K562 (cell line): ENCODE measurements at regions of chr4 and their contacts with region 1.

Region 1: DNA sequence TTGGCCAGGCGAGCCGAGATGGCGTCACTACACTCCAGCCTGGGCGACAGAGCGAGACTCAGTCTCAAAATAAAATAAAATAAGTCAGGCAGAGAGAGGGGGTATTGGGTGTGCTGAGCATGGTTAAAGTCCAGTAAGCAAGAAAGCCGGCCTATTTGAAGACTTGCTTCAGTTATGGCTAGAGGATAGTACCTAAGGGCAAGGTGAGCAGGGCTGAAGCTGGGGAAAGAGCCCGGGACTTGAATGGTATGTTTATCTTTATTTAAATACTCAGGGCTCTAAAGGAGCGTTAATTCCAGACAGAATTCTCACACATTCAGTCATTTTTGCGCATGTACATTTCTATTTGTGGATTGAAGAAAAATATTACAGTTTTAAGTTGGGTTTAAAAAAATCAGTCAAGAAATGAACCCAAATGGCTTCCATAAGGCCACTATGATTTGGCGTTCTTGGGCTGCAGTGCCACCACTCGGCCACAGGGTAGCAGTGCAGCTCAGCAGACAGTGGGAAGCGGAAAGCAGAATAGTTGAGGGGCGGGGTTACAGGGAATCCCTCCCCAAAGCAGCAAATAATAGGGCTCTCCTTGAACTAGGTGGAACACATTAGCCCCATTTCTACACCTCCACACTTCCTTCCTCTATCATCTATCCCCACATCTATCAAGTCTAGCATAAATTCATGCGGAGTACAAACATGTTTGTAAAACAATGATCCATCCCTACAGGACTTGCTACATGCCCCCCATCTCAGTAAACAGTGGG is 37.2 kb upstream of the SH3D19 start:
- DNase-seq: peak; percentile 83 to 85 (median 84)
- ATAC-seq: peak; percentile 100
- H3K4me3 ChIP-seq: no peak overlapping the region
- H3K27ac ChIP-seq: no peak overlapping the region
- H3K4me1 ChIP-seq: no peaks in the 10 kb centered on the region
- H3K27me3 ChIP-seq: no peaks in the 10 kb centered on the region
- CTCF ChIP-seq: peak; percentile 88 to 97 (median 93)
- EP300 ChIP-seq: no peak
- POLR2A ChIP-seq: no peak
- RAD21 ChIP-seq: peak; percentile 79 to 86

Region 2: GRCh38 chr4:151276787-151277562 is 85.6 kb before region 1 on chr4 and contains the start of gene PRSS48:
- CTCF ChIA-PET with region 1: no interaction called
- POLR2A ChIA-PET with region 1: no interaction called
- in situ Hi-C with region 1: no loop called
- intact Hi-C with region 1: loop called (anchors 1 kb)
- DNase-seq: peak; percentile 62 to 69 (median 64)
- ATAC-seq: peak; percentile 99
- H3K4me3 ChIP-seq: no peak within 1 kb of the TSS
- H3K27ac ChIP-seq: no peak within 1 kb of the TSS
- H3K4me1 ChIP-seq: no peaks in the 10 kb centered on the region
- H3K27me3 ChIP-seq: peaks cover 3 to 4% of the 10 kb centered on the region in 2 experiments; a peak in 2 of 5 replicates
- CTCF ChIP-seq: peak; percentile 74 to 87 (median 79)
- EP300 ChIP-seq: no peak
- POLR2A ChIP-seq: no peak
- RAD21 ChIP-seq: peak; percentile 37 to 69
- polyA plus RNA-seq, gene PRSS48: not detected

Region 3: DNA sequence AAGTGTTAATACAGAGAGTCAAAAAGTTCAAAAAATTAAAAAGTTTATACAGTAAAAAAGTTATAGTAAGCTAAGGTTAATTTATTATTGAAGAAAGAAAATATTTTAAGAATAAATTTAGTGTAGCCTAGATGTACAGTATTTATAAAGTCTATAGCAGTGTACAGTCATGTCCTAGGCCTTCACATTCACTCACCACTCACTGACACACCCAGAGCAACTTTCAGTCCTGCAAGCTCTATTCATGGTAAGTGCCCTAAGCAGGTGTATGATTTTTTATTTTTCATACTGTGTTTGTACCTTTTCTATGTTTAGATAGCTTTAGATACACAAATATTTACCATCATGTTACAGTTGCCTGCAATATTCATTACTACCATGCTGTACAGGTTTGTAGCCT is 155.3 kb after region 1 on chr4:
- CTCF ChIA-PET with region 1: no interaction called
- POLR2A ChIA-PET with region 1: no interaction called
- in situ Hi-C with region 1: no loop called
- intact Hi-C with region 1: no loop called
- DNase-seq: no peak
- ATAC-seq: no peak
- H3K4me3 ChIP-seq: no peak overlapping the region
- H3K27ac ChIP-seq: no peak overlapping the region
- H3K4me1 ChIP-seq: no peaks in the 10 kb centered on the region
- H3K27me3 ChIP-seq: no peaks in the 10 kb centered on the region
- CTCF ChIP-seq: no peak
- EP300 ChIP-seq: no peak
- POLR2A ChIP-seq: no peak
- RAD21 ChIP-seq: no peak

Region 4: GRCh38 chr4:151614561-151614960 is 252.0 kb after region 1 on chr4:
- CTCF ChIA-PET with region 1: interaction called, 5 read pairs
- POLR2A ChIA-PET with region 1: no interaction called
- in situ Hi-C with region 1: no loop called
- intact Hi-C with region 1: loop called (anchors 1 kb)
- DNase-seq: no peak
- ATAC-seq: no peak
- H3K4me3 ChIP-seq: no peak overlapping the region
- H3K27ac ChIP-seq: no peak overlapping the region
- H3K4me1 ChIP-seq: no peaks in the 10 kb centered on the region
- H3K27me3 ChIP-seq: peaks cover 0 to 4% of the 10 kb centered on the region in 2 experiments; a peak in 1 of 5 replicates
- CTCF ChIP-seq: no peak
- EP300 ChIP-seq: no peak
- POLR2A ChIP-seq: no peak
- RAD21 ChIP-seq: no peak